Gastrocnemius medialis (tissue), 4 donors: ENCODE measurements at regions of chr5 and their contacts with region 1.

Region 1: DNA sequence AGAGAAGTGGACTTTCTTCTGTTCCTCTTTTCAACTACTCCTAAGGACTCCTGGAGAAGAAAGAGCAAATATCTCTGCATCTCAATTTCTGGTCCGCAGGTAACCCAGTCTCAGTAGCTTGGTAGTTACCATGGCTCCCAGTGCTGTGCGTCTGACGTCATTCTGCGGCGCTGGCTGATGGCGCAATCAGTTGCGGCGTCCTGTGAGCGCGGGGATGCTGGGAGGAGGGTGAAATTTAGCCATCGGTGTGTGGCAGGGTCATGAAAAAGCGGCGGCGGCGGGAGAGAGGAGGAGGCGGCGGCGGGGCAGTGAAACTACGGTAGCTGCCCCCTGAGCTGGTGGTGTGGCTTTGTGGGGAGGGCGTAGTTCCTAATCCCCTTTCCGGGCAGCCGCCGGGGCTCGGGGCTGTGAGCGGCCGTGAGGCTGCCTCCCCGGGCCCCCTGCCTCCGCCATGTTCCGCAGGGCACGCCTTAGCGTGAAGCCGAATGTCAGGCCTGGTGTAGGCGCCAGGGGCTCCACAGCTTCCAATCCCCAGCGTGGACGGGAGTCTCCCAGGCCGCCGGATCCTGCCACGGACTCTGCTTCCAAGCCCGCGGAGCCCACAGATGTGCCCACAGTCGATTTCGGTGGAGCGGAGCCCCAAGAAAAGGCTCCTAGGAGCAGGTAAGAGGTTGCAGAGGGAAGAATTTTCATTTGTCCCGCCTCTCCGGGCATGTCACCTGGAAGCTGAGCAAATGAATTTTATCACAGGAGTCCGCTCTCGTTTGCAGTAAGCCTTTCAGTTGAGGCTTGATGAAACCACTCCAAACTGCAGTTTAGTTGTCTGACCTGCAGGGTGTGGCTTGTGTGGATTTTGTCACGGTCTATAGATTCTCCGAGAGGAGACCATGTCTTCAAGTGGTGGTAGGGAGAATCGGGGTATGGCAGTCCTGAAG is at the start of gene BDP1:
- DNase-seq: peak; percentile 89 to 92
- ATAC-seq: peak; percentile 98 to 99
- H3K4me3 ChIP-seq: peak within 1 kb of the TSS; percentile 75 to 91 (median 85)
- H3K27ac ChIP-seq: peak within 1 kb of the TSS; percentile 86 to 87 (median 86)
- H3K4me1 ChIP-seq: peaks cover 16 to 21% of the 10 kb centered on the region in 2 donors
- H3K27me3 ChIP-seq: no peaks in the 10 kb centered on the region
- CTCF ChIP-seq: peak in 4 of 5 experiments; percentile 17 to 40 (median 22)
- POLR2A ChIP-seq: peak; percentile 40 to 58
- total RNA-seq, gene BDP1: 8.1 to 19.4 (median 14.2) TPM

Region 2: GRCh38 chr5:71757590-71758543 is 302.2 kb after region 1 on chr5:
- in situ Hi-C with region 1: loop called in 1 of 4 experiments (anchors 25 kb)
- intact Hi-C with region 1: no loop called
- DNase-seq: peak in 1 of 2 donors; percentile 23
- ATAC-seq: peak; percentile 80 to 93
- H3K4me3 ChIP-seq: peak overlapping the region in 3 of 4 donors; percentile 23 to 39 (median 27)
- H3K27ac ChIP-seq: no peak overlapping the region
- H3K4me1 ChIP-seq: peaks cover 0 to 6% of the 10 kb centered on the region in 2 donors
- H3K27me3 ChIP-seq: no peaks in the 10 kb centered on the region
- CTCF ChIP-seq: peak; percentile 12 to 61 (median 31)
- POLR2A ChIP-seq: no peak